Natural killer cell (primary cell): ENCODE measurements at regions of chr14 and their contacts with region 1.

Region 1: GRCh38 chr14:95534299-95535225 is at the start of gene GLRX5:
- DNase-seq: peak; percentile 95 to 99
- ATAC-seq: peak; percentile 85 to 94 (median 86)
- H3K4me3 ChIP-seq: peak within 1 kb of the TSS; percentile 58
- H3K4me3 Mint-ChIP-seq: peak within 1 kb of the TSS; percentile 97
- H3K27ac ChIP-seq: peak within 1 kb of the TSS; percentile 89
- H3K27ac Mint-ChIP-seq: peak within 1 kb of the TSS; percentile 95 to 96
- H3K4me1 ChIP-seq: peaks cover 20% of the 10 kb centered on the region
- H3K4me1 Mint-ChIP-seq: peaks cover 63 to 69% of the 10 kb centered on the region in 2 donors
- H3K27me3 ChIP-seq: no peaks in the 10 kb centered on the region
- H3K27me3 Mint-ChIP-seq: no peaks in the 10 kb centered on the region
- CTCF ChIP-seq: no peak
- total RNA-seq, gene GLRX5: 16.7 to 26.0 (median 23.4) TPM

Region 2: DNA sequence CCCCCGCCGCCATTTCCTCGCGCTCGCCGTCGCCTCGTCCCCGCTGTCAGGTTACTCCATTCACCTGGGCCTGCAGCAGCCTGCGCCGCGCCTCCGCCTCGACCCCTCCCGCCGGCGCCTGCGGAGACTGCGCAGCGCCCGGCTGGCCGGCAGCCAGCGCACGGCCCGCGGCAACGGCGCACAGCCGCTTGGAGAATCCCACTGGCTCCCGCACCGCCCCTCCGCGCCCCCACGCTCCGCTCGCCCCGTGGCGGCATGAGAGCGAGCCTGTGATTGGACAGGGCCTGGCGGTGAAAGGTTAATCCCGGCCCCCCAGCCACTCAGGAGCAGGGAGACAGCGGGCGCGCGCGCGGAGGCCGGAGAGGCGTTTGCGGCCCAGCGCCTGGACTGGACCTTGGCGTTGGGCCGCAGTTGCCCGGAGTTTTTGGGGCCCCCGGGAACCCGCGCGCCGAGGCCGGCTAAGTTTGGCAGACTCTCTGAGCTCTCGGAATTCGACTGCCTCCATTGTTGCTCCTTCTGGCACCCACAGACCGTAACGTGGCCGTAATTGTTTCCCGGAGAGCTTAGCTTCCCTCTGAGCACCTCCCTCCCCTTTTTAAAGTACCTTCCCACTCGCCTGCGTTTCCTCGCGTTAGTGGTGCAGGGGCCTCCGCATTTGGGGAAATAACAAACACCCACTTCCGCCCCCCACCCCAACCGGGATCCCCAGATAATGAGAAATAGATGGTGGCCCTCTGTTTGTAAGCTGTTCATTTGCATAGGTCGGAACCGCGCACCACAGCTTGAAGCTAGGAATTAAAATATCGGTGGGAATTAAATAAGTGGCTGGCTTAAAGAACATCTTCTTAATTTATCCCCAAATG is 377.0 kb before region 1 on chr14 and contains the start of gene DICER1:
- intact Hi-C with region 1: loop called (anchors 5 kb)
- DNase-seq: peak; percentile 94 to 96
- ATAC-seq: peak; percentile 83 to 91 (median 84)
- H3K4me3 ChIP-seq: peak within 1 kb of the TSS; percentile 69
- H3K4me3 Mint-ChIP-seq: peak within 1 kb of the TSS; percentile 91
- H3K27ac ChIP-seq: peak within 1 kb of the TSS; percentile 92
- H3K27ac Mint-ChIP-seq: peak within 1 kb of the TSS; percentile 89 to 96
- H3K4me1 ChIP-seq: peaks cover 14% of the 10 kb centered on the region
- H3K4me1 Mint-ChIP-seq: peaks cover 37 to 38% of the 10 kb centered on the region in 2 donors
- H3K27me3 ChIP-seq: no peaks in the 10 kb centered on the region
- H3K27me3 Mint-ChIP-seq: no peaks in the 10 kb centered on the region
- CTCF ChIP-seq: no peak
- total RNA-seq, gene DICER1: 47.7 to 59.3 (median 52.9) TPM

Region 3: DNA sequence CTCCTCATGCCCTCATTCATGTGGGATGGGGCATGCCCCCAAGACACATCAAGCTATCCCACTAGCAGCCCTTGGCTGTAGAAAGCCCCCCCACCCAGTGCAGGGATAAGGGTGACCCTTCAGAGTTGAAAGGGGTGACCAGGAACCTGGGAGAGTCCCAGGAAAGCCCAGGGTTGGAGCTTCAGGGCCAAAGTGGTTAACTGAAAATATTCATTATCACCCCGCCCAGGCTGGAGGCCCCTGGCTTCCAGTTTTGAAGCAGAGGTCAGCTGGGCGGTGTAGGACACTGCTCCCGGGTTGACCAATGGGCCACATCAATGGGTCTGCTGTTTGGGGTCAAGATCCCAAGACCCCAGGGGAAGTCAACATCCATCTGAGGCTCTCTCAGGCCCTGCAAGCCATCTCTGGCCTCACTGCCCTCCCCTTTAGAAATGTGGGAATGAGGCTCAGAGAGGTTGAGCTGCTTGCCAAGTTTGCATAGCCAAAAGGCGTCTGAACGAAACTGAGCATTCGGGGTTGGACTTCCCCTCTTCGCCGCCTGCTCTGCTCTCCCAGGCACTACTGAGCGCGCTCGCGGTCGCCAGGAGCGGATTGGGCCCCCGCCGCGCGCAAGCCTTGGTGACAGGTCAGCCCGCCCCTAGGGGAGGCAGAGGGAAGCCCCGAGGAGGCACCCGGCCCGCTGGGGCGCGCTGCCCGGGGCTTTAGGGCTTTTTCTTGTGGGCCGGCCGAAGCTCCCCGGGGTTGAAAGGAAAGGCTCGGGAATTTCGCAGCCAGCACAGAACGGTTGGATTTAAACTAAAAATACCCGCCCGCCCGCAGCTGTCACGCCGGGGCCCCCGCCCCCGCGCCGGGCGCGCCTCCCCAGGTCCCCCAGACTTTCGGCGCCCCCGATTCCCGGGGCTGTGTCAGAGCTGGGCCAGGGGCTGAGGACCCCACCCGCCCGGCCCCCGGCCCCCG is 18.7 kb before region 1 on chr14:
- intact Hi-C with region 1: loop called (anchors 1 kb)
- DNase-seq: peak; percentile 87 to 93
- ATAC-seq: peak; percentile 92 to 98 (median 96)
- H3K4me3 ChIP-seq: peak overlapping the region; percentile 41
- H3K4me3 Mint-ChIP-seq: peak overlapping the region; percentile 85
- H3K27ac ChIP-seq: peak overlapping the region; percentile 74
- H3K27ac Mint-ChIP-seq: peak overlapping the region; percentile 76 to 88
- H3K4me1 ChIP-seq: peaks cover 63% of the 10 kb centered on the region
- H3K4me1 Mint-ChIP-seq: peaks cover 36 to 44% of the 10 kb centered on the region in 2 donors
- H3K27me3 ChIP-seq: no peaks in the 10 kb centered on the region
- H3K27me3 Mint-ChIP-seq: no peaks in the 10 kb centered on the region
- CTCF ChIP-seq: peak; percentile 60

Region 4: DNA sequence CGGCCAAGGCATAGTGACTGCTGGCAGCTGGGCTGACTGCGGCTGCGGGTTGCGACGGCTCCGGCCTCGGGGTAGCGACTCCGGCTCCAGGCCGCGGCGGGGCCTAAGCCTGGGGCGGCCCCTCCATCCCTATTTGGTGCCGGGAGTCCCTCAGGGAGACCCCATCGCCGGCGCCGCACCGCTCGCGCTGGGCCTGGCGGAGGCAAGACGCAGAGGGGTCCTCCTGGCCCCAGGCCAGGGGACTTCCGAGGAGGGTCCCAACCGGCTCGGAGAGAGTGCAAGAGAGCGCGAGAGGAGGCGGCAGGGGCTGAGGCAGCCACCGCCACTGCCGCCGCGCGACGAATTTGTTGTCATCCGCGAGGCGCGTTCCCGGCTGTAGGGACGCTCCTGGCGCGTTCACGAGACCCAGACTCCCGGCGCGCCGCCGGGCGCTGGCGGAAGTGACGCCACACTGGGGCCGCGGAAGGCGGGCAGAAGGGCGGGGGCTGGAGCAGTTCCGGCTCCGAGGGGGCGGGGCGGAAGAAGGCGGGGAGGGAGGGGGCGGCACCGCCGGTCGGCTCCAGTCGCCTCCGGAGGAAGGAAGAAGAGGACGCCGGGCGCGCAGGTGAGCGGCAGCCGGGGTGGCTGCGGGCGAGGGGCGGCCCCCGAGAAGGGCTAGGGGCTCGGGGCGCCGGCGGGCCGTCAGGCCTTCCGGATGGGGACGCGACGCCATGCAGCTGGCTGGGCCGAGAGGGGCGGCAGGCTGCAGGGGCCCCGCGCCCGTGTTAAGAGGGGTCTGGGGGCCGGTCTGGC is 828.6 kb after region 1 on chr14 and contains the starts of genes ATG2B and GSKIP:
- intact Hi-C with region 1: loop called (anchors 2 kb)
- DNase-seq: peak; percentile 98 to 99
- ATAC-seq: peak; percentile 82 to 96 (median 87)
- H3K4me3 ChIP-seq: peak within 1 kb of the TSS; percentile 88
- H3K4me3 Mint-ChIP-seq: peak within 1 kb of the TSS; percentile 91
- H3K27ac ChIP-seq: peak within 1 kb of the TSS; percentile 92
- H3K27ac Mint-ChIP-seq: peak within 1 kb of the TSS; percentile 83 to 93
- H3K4me1 ChIP-seq: peaks cover 24% of the 10 kb centered on the region
- H3K4me1 Mint-ChIP-seq: peaks cover 35 to 45% of the 10 kb centered on the region in 2 donors
- H3K27me3 ChIP-seq: no peaks in the 10 kb centered on the region
- H3K27me3 Mint-ChIP-seq: no peaks in the 10 kb centered on the region
- CTCF ChIP-seq: no peak
- total RNA-seq, gene ATG2B: 34.8 to 45.6 (median 35.8) TPM
- total RNA-seq, gene GSKIP: 6.6 to 11.8 (median 7.9) TPM